Activated CD8-positive, alpha-beta T cell treated with anti-CD3 and anti-CD28 coated beads for 36 hours (primary cell): ENCODE measurements at regions of chr6 and their contacts with region 1.

Region 1: GRCh38 chr6:31087494-31088089 is 24.8 kb downstream of the C6orf15 start:
- DNase-seq: peak; percentile 92
- ATAC-seq: peak; percentile 97
- H3K4me3 Mint-ChIP-seq: no peak overlapping the region
- H3K27ac Mint-ChIP-seq: no peak overlapping the region
- H3K4me1 Mint-ChIP-seq: peaks cover 10% of the 10 kb centered on the region
- H3K27me3 Mint-ChIP-seq: no peaks in the 10 kb centered on the region
- CTCF ChIP-seq: peak; percentile 72

Region 2: GRCh38 chr6:30821862-30822782 is 265.5 kb before region 1 on chr6:
- CTCF ChIA-PET with region 1: interaction called, 16 read pairs
- POLR2A ChIA-PET with region 1: no interaction called
- intact Hi-C with region 1: no loop called
- DNase-seq: no peak
- ATAC-seq: no peak
- H3K4me3 Mint-ChIP-seq: no peak overlapping the region
- H3K27ac Mint-ChIP-seq: peak overlapping the region; percentile 82
- H3K4me1 Mint-ChIP-seq: peaks cover 79% of the 10 kb centered on the region
- H3K27me3 Mint-ChIP-seq: no peaks in the 10 kb centered on the region
- CTCF ChIP-seq: peak; percentile 74

Region 3: GRCh38 chr6:30836431-30836866 is 251.1 kb before region 1 on chr6:
- CTCF ChIA-PET with region 1: interaction called, 15 read pairs
- POLR2A ChIA-PET with region 1: no interaction called
- intact Hi-C with region 1: no loop called
- DNase-seq: no peak
- ATAC-seq: no peak
- H3K4me3 Mint-ChIP-seq: no peak overlapping the region
- H3K27ac Mint-ChIP-seq: no peak overlapping the region
- H3K4me1 Mint-ChIP-seq: peaks cover 23% of the 10 kb centered on the region
- H3K27me3 Mint-ChIP-seq: no peaks in the 10 kb centered on the region
- CTCF ChIP-seq: no peak

Region 4: GRCh38 chr6:30914076-30914853 is 173.3 kb before region 1 on chr6 and contains the start of gene VARS2:
- CTCF ChIA-PET with region 1: interaction called, 116 read pairs
- POLR2A ChIA-PET with region 1: interaction called, 4 read pairs
- intact Hi-C with region 1: loop called (anchors 5 kb)
- DNase-seq: peak; percentile 89
- ATAC-seq: peak; percentile 96
- H3K4me3 Mint-ChIP-seq: peak within 1 kb of the TSS; percentile 80
- H3K27ac Mint-ChIP-seq: peak within 1 kb of the TSS; percentile 88
- H3K4me1 Mint-ChIP-seq: peaks cover 29% of the 10 kb centered on the region
- H3K27me3 Mint-ChIP-seq: no peaks in the 10 kb centered on the region
- CTCF ChIP-seq: no peak
- total RNA-seq, gene VARS2: 83.0 to 84.0 TPM

Region 5: DNA sequence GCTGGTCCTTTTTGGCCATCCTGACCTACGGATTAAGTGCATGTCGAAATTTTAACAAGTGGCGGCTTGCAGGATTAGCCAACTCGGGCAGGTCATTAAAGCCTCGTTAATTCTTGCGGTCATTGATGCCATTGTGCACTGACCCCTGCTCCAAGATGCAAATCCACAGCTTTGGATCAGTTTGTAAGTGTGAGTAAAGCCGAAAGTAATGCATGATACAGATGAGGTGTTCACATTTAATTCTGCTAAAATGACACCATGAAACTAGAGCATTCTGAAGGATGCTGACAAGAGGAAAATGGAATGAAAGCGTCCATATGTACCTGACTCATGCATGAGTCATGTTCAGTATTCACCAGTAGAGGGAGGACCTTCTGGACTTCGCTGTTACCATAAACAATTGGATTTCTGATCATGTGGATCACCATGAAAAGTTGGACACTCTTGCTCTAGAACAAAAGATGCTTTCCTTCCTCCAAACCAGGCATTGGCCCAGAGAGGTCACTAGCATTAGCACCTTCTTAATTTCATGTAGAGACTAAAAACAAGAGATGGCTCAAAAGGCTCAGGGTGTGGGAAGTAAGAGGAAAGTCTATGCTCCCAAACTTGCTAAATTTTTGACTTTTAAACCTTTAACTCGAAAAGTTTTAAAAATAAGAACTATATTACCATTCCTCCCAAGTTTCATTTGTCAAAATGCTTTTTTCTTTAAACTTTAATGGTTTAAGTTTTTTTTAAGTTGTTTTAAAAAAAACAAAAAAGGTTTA is 29.3 kb before region 1 on chr6:
- CTCF ChIA-PET with region 1: interaction called, 21 read pairs
- POLR2A ChIA-PET with region 1: no interaction called
- intact Hi-C with region 1: no loop called
- DNase-seq: no peak
- ATAC-seq: peak; percentile 67
- H3K4me3 Mint-ChIP-seq: no peak overlapping the region
- H3K27ac Mint-ChIP-seq: no peak overlapping the region
- H3K4me1 Mint-ChIP-seq: peaks cover 5% of the 10 kb centered on the region
- H3K27me3 Mint-ChIP-seq: peaks cover 8% of the 10 kb centered on the region
- CTCF ChIP-seq: peak; percentile 30

Region 6: GRCh38 chr6:31068669-31069340 is 18.8 kb before region 1 on chr6:
- CTCF ChIA-PET with region 1: interaction called, 21 read pairs
- POLR2A ChIA-PET with region 1: no interaction called
- intact Hi-C with region 1: no loop called
- DNase-seq: peak; percentile 75
- ATAC-seq: peak; percentile 96
- H3K4me3 Mint-ChIP-seq: no peak overlapping the region
- H3K27ac Mint-ChIP-seq: no peak overlapping the region
- H3K4me1 Mint-ChIP-seq: peaks cover 1% of the 10 kb centered on the region
- H3K27me3 Mint-ChIP-seq: no peaks in the 10 kb centered on the region
- CTCF ChIP-seq: peak; percentile 89

Region 7: GRCh38 chr6:31143148-31143547 is 55.6 kb after region 1 on chr6:
- CTCF ChIA-PET with region 1: no interaction called
- POLR2A ChIA-PET with region 1: no interaction called
- intact Hi-C with region 1: no loop called
- DNase-seq: no peak
- ATAC-seq: no peak
- H3K4me3 Mint-ChIP-seq: no peak overlapping the region
- H3K27ac Mint-ChIP-seq: no peak overlapping the region
- H3K4me1 Mint-ChIP-seq: no peaks in the 10 kb centered on the region
- H3K27me3 Mint-ChIP-seq: no peaks in the 10 kb centered on the region
- CTCF ChIP-seq: no peak